ENCODE measurements at regions of chr6 and their contacts with region 1.

Region 1: GRCh38 chr6:20212392-20213217 is at the start of gene MBOAT1:
- DNase-seq: peak; percentile 79
- H3K4me3 Mint-ChIP-seq: peak within 1 kb of the TSS; percentile 93
- H3K27ac Mint-ChIP-seq: peak within 1 kb of the TSS; percentile 95
- H3K4me1 Mint-ChIP-seq: peaks cover 46% of the 10 kb centered on the region
- H3K27me3 Mint-ChIP-seq: no peaks in the 10 kb centered on the region
- total RNA-seq, gene MBOAT1: 25.5 to 27.1 TPM

Region 2: GRCh38 chr6:20197251-20197650 is 15.4 kb before region 1 on chr6:
- CTCF ChIA-PET with region 1: interaction called, 18 read pairs
- POLR2A ChIA-PET with region 1: interaction called, 42 read pairs
- DNase-seq: no peak
- H3K4me3 Mint-ChIP-seq: no peak overlapping the region
- H3K27ac Mint-ChIP-seq: no peak overlapping the region
- H3K4me1 Mint-ChIP-seq: peaks cover 38% of the 10 kb centered on the region
- H3K27me3 Mint-ChIP-seq: no peaks in the 10 kb centered on the region

Region 3: DNA sequence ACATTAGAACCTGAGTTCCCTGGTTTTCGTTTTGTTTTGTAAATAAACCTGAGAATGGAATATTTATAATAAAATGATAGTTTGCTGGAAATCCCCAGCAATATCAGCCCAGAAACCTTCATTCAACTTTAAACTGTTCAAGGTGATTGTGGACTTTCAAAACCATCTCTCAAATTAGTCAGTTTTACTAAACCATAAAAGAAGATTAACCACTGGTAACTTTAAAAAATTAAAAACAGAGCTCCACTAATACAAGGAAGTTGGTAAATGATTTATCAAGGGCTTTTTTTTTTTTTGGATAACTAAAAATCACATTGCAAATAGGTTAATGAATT is 10.3 kb before region 1 on chr6:
- CTCF ChIA-PET with region 1: interaction called, 18 read pairs
- POLR2A ChIA-PET with region 1: interaction called, 42 read pairs
- DNase-seq: no peak
- H3K4me3 Mint-ChIP-seq: no peak overlapping the region
- H3K27ac Mint-ChIP-seq: peak overlapping the region; percentile 22
- H3K4me1 Mint-ChIP-seq: peaks cover 80% of the 10 kb centered on the region
- H3K27me3 Mint-ChIP-seq: no peaks in the 10 kb centered on the region

Region 4: GRCh38 chr6:20534295-20535262 is 322.0 kb after region 1 on chr6 and contains the start of gene CDKAL1:
- CTCF ChIA-PET with region 1: interaction called, 5 read pairs
- POLR2A ChIA-PET with region 1: interaction called, 11 read pairs
- DNase-seq: peak; percentile 95
- H3K4me3 Mint-ChIP-seq: peak within 1 kb of the TSS; percentile 97
- H3K27ac Mint-ChIP-seq: peak within 1 kb of the TSS; percentile 94
- H3K4me1 Mint-ChIP-seq: peaks cover 48% of the 10 kb centered on the region
- H3K27me3 Mint-ChIP-seq: peaks cover 1% of the 10 kb centered on the region
- total RNA-seq, gene CDKAL1: 21.2 to 23.0 TPM

Measured in activated CD4-positive, alpha-beta memory T cell treated with anti-CD3 and anti-CD28 coated beads, Interleukin-2, amount 10 ng/mL, durations not matched to agents 7 days and 5 days (primary cell).